ENCODE measurements at regions of chr1 and their contacts with region 1.

Region 1: GRCh38 chr1:201396861-201397464 is 2.2 kb downstream of the LAD1 start:
- H3K4me3 ChIP-seq: no peak overlapping the region
- H3K27ac ChIP-seq: no peak overlapping the region
- H3K4me1 ChIP-seq: no peaks in the 10 kb centered on the region
- CTCF ChIP-seq: no peak

Region 2: GRCh38 chr1:201385299-201385891 is 11.6 kb before region 1 on chr1:
- CTCF ChIA-PET with region 1: interaction called, 29 read pairs
- POLR2A ChIA-PET with region 1: interaction called, 4 read pairs
- H3K4me3 ChIP-seq: no peak overlapping the region
- H3K27ac ChIP-seq: no peak overlapping the region
- H3K4me1 ChIP-seq: no peaks in the 10 kb centered on the region
- CTCF ChIP-seq: peak; percentile 76